GM13976 (cell line): ENCODE measurements at regions of chr2 and their contacts with region 1.

Region 1: GRCh38 chr2:55718165-55719008 is 24.7 kb upstream of the PNPT1 start:
- DNase-seq: peak; percentile 58
- CTCF ChIP-seq: peak; percentile 58

Region 2: GRCh38 chr2:55839182-55839819 is 120.9 kb after region 1 on chr2:
- in situ Hi-C with region 1: no loop called
- DNase-seq: no peak
- CTCF ChIP-seq: no peak

Region 3: GRCh38 chr2:55961318-55961911 is 243.0 kb after region 1 on chr2:
- in situ Hi-C with region 1: loop called (anchors 25 kb)
- DNase-seq: peak; percentile 43
- CTCF ChIP-seq: peak; percentile 32